GM12878 (cell line): ENCODE measurements at regions of chr20 and their contacts with region 1.

Region 1: DNA sequence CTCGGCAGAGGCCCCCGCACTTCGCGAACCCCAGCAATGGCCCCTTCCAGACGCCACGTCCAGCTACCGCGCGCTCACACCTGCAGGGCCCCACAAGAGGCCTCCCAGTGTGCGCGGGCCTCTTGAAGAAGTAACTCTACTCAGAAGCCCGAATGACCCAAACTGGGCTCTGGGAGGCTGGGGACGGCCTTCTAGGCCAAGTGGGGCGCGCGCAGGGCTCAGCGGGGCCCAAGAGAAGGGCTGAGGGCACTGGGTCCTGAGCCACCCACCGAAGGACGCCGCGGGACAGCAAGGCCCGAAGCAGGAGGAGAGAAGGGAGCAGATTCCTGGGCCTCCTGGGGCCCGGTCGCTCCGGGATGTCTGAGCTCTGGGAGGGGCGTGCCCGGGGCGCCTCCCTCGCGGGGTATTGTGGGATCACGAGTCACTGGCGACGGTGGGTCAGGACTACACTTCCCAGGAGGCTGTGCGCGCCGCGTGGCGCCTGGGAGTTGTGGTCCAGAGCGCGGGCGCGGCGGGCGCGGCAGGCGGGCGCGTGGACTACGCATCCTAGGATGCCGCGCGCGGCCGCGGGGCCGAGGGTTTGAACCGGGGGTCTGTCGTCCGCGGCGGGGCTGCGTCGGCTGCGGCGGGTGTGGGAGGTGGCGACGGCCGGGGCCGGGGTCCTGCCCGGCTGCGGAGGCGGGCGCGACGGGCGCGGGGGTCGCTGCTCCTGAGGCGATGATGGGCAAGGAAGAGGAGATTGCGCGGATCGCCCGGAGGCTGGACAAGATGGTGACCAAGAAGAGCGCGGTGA is at the start of gene TCEA2:
- DNase-seq: no peak
- ATAC-seq: peak; percentile 85
- H3K4me3 ChIP-seq: peak within 1 kb of the TSS; percentile 74
- H3K27ac ChIP-seq: peak within 1 kb of the TSS; percentile 56
- H3K4me1 ChIP-seq: peaks cover 41% of the 10 kb centered on the region
- H3K27me3 ChIP-seq: no peaks in the 10 kb centered on the region
- CTCF ChIP-seq: no peak
- EP300 ChIP-seq: no peak
- POLR2A ChIP-seq: peak; percentile 67
- RAD21 ChIP-seq: no peak
- polyA plus RNA-seq, gene TCEA2: 3.4 to 12.3 TPM

Region 2: GRCh38 chr20:63864847-63865640 is 197.7 kb before region 1 on chr20 and contains the start of gene TPD52L2:
- CTCF ChIA-PET with region 1: interaction called, 7 read pairs
- POLR2A ChIA-PET with region 1: no interaction called
- RAD21 ChIA-PET with region 1: interaction called, 8 read pairs
- SMC1A ChIA-PET with region 1: interaction called, 6 read pairs
- in situ Hi-C with region 1: no loop called
- intact Hi-C with region 1: loop called (anchors 10 kb)
- DNase-seq: peak; percentile 94
- ATAC-seq: peak; percentile 91
- H3K4me3 ChIP-seq: peak within 1 kb of the TSS; percentile 96
- H3K27ac ChIP-seq: peak within 1 kb of the TSS; percentile 90
- H3K4me1 ChIP-seq: peaks cover 7% of the 10 kb centered on the region
- H3K27me3 ChIP-seq: no peaks in the 10 kb centered on the region
- CTCF ChIP-seq: no peak
- EP300 ChIP-seq: 0 out of 4 replicates have a peak, but pooled peaks of 1 of the 2 experiments have one; percentile 19
- POLR2A ChIP-seq: peak; percentile 96
- RAD21 ChIP-seq: no peak
- polyA plus RNA-seq, gene TPD52L2: 1.6 to 4.1 TPM

Region 3: GRCh38 chr20:63955827-63956663 is 106.7 kb before region 1 on chr20 and contains the start of gene UCKL1:
- CTCF ChIA-PET with region 1: interaction called, 4 read pairs
- POLR2A ChIA-PET with region 1: interaction called, 3 read pairs
- RAD21 ChIA-PET with region 1: interaction called, 5 read pairs
- SMC1A ChIA-PET with region 1: no interaction called
- in situ Hi-C with region 1: no loop called
- intact Hi-C with region 1: loop called (anchors 5 kb)
- DNase-seq: no peak
- ATAC-seq: peak; percentile 87
- H3K4me3 ChIP-seq: peak within 1 kb of the TSS; percentile 81
- H3K27ac ChIP-seq: peak within 1 kb of the TSS; percentile 83
- H3K4me1 ChIP-seq: peaks cover 10% of the 10 kb centered on the region
- H3K27me3 ChIP-seq: no peaks in the 10 kb centered on the region
- CTCF ChIP-seq: no peak; a peak in 1 of 6 replicates
- EP300 ChIP-seq: no peak
- POLR2A ChIP-seq: peak; percentile 91
- RAD21 ChIP-seq: no peak
- polyA plus RNA-seq, gene UCKL1: 2.4 to 7.9 TPM

Region 4: GRCh38 chr20:63980806-63981728 is 81.7 kb before region 1 on chr20 and contains the start of gene PRPF6:
- CTCF ChIA-PET with region 1: interaction called, 24 read pairs
- POLR2A ChIA-PET with region 1: interaction called, 4 read pairs
- RAD21 ChIA-PET with region 1: interaction called, 11 read pairs
- SMC1A ChIA-PET with region 1: interaction called, 4 read pairs
- in situ Hi-C with region 1: no loop called
- intact Hi-C with region 1: loop called (anchors 5 kb)
- DNase-seq: peak; percentile 83
- ATAC-seq: peak; percentile 68
- H3K4me3 ChIP-seq: peak within 1 kb of the TSS; percentile 96
- H3K27ac ChIP-seq: peak within 1 kb of the TSS; percentile 92
- H3K4me1 ChIP-seq: peaks cover 23% of the 10 kb centered on the region
- H3K27me3 ChIP-seq: no peaks in the 10 kb centered on the region
- CTCF ChIP-seq: peak; percentile 83 to 97 (median 88)
- EP300 ChIP-seq: no peak
- POLR2A ChIP-seq: peak; percentile 89
- RAD21 ChIP-seq: peak; percentile 57
- polyA plus RNA-seq, gene PRPF6: 5.0 to 10.7 TPM

Region 5: GRCh38 chr20:64038565-64039292 is 24.1 kb before region 1 on chr20:
- CTCF ChIA-PET with region 1: interaction called, 108 read pairs
- POLR2A ChIA-PET with region 1: interaction called, 28 read pairs
- RAD21 ChIA-PET with region 1: interaction called, 78 read pairs
- SMC1A ChIA-PET with region 1: interaction called, 21 read pairs
- in situ Hi-C with region 1: no loop called
- intact Hi-C with region 1: loop called (anchors 2 kb)
- DNase-seq: no peak
- ATAC-seq: peak; percentile 68
- H3K4me3 ChIP-seq: peak overlapping the region; percentile 58
- H3K27ac ChIP-seq: peak overlapping the region; percentile 69
- H3K4me1 ChIP-seq: peaks cover 51% of the 10 kb centered on the region
- H3K27me3 ChIP-seq: no peaks in the 10 kb centered on the region
- CTCF ChIP-seq: peak; percentile 65 to 85 (median 82)
- EP300 ChIP-seq: no peak
- POLR2A ChIP-seq: peak; percentile 61
- RAD21 ChIP-seq: peak; percentile 72

Region 6: GRCh38 chr20:64079273-64080012 is 16.7 kb after region 1 on chr20 and contains the start of gene RGS19:
- CTCF ChIA-PET with region 1: interaction called, 19 read pairs
- POLR2A ChIA-PET with region 1: interaction called, 10 read pairs
- RAD21 ChIA-PET with region 1: interaction called, 8 read pairs
- SMC1A ChIA-PET with region 1: interaction called, 10 read pairs
- in situ Hi-C with region 1: no loop called
- intact Hi-C with region 1: loop called (anchors 2 kb)
- DNase-seq: no peak
- ATAC-seq: peak; percentile 45
- H3K4me3 ChIP-seq: peak within 1 kb of the TSS; percentile 83
- H3K27ac ChIP-seq: peak within 1 kb of the TSS; percentile 85
- H3K4me1 ChIP-seq: peaks cover 26% of the 10 kb centered on the region
- H3K27me3 ChIP-seq: peaks cover 2 to 4% of the 10 kb centered on the region in 2 experiments; a peak in 2 of 4 replicates
- CTCF ChIP-seq: no peak
- EP300 ChIP-seq: no peak
- POLR2A ChIP-seq: peak; percentile 67
- RAD21 ChIP-seq: no peak
- polyA plus RNA-seq, gene RGS19: 0.82 to 3.3 TPM